ENCODE measurements at regions of chr10 and their contacts with region 1.

Region 1: DNA sequence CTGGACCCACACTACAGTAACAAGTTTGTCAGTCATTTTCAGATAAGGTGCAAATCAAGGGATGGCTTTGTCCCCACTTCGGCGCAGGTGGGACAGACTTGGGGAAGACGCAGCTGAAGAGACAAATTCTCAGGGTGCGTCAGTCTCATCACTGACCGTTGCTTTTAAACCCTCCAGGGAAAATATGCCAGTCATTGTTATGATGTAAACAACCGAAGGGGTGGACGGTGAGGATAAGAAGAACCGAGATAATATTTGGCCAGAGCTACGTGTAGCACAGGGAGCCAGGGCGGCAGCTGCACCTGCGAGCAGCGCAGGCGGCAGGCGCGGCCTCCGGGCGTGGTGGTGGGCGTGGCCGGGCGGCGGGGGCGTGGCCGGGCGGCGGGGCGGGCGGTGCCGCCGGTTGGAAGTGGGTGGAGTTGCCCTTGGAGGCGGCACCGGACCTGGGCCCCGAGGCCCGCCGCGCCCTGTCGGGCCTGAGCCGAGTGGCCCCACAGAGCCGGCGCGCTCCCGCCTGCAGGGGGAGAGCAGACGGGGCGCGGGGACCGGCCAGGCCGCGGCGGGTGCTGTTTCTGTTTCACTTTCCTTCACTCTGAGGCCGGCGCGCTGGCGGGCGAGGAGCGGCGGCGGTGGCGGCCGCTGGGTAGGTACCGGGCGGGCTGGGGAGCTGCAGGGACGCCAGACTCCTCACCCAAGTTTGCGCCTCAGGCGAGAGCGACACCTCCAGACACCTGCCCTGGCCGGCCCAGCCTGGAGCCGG is at the start of gene PCGF5:
- DNase-seq: peak; percentile 92 to 94 (median 93)
- H3K4me3 ChIP-seq: peak within 1 kb of the TSS; percentile 72 to 98 (median 84)
- H3K27ac ChIP-seq: peak within 1 kb of the TSS; percentile 23 to 99 (median 95)
- H3K4me1 ChIP-seq: peaks cover 14 to 57% of the 10 kb centered on the region in 2 donors
- H3K27me3 ChIP-seq: no peaks in the 10 kb centered on the region
- CTCF ChIP-seq: peak in 5 of 6 experiments; percentile 10 to 71 (median 42)
- POLR2A ChIP-seq: peak; percentile 73 to 93
- total RNA-seq, gene PCGF5: 51.0 to 101 (median 74.9) TPM

Region 2: GRCh38 chr10:91163269-91163868 is 57.0 kb before region 1 on chr10:
- intact Hi-C with region 1: loop called in 1 of 2 experiments (anchors 10 kb)
- DNase-seq: peak in 6 of 7 donors; percentile 67 to 81 (median 74)
- H3K4me3 ChIP-seq: peak overlapping the region; percentile 45 to 98 (median 90)
- H3K27ac ChIP-seq: peak overlapping the region; percentile 96 to 99 (median 99)
- H3K4me1 ChIP-seq: peaks cover 7 to 35% of the 10 kb centered on the region in 2 donors
- H3K27me3 ChIP-seq: no peaks in the 10 kb centered on the region
- CTCF ChIP-seq: peak in 1 of 6 experiments; percentile 7
- POLR2A ChIP-seq: peak; percentile 64 to 71

Region 3: GRCh38 chr10:92419740-92420545 is 1199.6 kb after region 1 on chr10:
- intact Hi-C with region 1: no loop called
- DNase-seq: peak; percentile 31 to 59 (median 35)
- H3K4me3 ChIP-seq: peak overlapping the region in 2 of 4 donors; percentile 18 to 50
- H3K27ac ChIP-seq: no peak overlapping the region
- H3K4me1 ChIP-seq: no peaks in the 10 kb centered on the region
- H3K27me3 ChIP-seq: peaks cover 2% of the 10 kb centered on the region
- CTCF ChIP-seq: peak in 2 of 6 experiments; percentile 12 to 43
- POLR2A ChIP-seq: no peak